ENCODE measurements at regions of chr15 and their contacts with region 1.

Region 1: GRCh38 chr15:42548253-42549031 is at the starts of genes HAUS2 and LRRC57:
- DNase-seq: peak; percentile 86
- H3K4me3 Mint-ChIP-seq: peak within 1 kb of the TSS; percentile 96
- H3K27ac Mint-ChIP-seq: peak within 1 kb of the TSS; percentile 94
- H3K4me1 Mint-ChIP-seq: peaks cover 50% of the 10 kb centered on the region
- H3K27me3 Mint-ChIP-seq: no peaks in the 10 kb centered on the region
- total RNA-seq, gene HAUS2: 43.2 and 46.7 TPM in 2 replicates
- total RNA-seq, gene LRRC57: 19.9 TPM in 2 replicates

Region 2: DNA sequence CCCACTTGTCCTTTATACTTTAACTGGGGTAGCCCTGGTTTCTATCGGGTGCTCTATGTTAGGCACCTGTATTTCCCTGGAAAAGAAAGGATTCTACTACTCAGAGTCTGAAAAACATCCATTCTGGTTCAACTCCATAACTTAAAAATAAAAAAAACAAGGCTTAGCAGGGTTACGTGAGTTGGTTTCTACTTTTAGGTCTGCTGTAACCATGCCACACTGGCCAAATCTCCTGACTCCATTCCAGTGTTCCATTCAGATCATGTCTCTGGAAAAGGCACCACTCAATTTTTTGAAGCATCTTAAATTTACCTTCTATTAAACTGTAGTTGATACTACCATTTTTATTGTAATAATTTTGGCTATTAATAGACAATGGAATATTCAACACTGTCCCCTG is 127.1 kb before region 1 on chr15:
- intact Hi-C with region 1: no loop called
- DNase-seq: no peak
- H3K4me3 Mint-ChIP-seq: no peak overlapping the region
- H3K27ac Mint-ChIP-seq: no peak overlapping the region
- H3K4me1 Mint-ChIP-seq: no peaks in the 10 kb centered on the region
- H3K27me3 Mint-ChIP-seq: no peaks in the 10 kb centered on the region

Region 3: GRCh38 chr15:42495361-42496212 is 52.9 kb before region 1 on chr15 and contains the start of gene SNAP23:
- intact Hi-C with region 1: loop called (anchors 1 kb)
- DNase-seq: peak; percentile 84
- H3K4me3 Mint-ChIP-seq: peak within 1 kb of the TSS; percentile 100
- H3K27ac Mint-ChIP-seq: peak within 1 kb of the TSS; percentile 89
- H3K4me1 Mint-ChIP-seq: peaks cover 60% of the 10 kb centered on the region
- H3K27me3 Mint-ChIP-seq: no peaks in the 10 kb centered on the region
- total RNA-seq, gene SNAP23: 73.8 and 87.5 TPM in 2 replicates

Region 4: GRCh38 chr15:42558739-42559138 is 10.3 kb after region 1 on chr15:
- intact Hi-C with region 1: no loop called
- DNase-seq: no peak
- H3K4me3 Mint-ChIP-seq: no peak overlapping the region
- H3K27ac Mint-ChIP-seq: no peak overlapping the region
- H3K4me1 Mint-ChIP-seq: peaks cover 11% of the 10 kb centered on the region
- H3K27me3 Mint-ChIP-seq: no peaks in the 10 kb centered on the region

Region 5: DNA sequence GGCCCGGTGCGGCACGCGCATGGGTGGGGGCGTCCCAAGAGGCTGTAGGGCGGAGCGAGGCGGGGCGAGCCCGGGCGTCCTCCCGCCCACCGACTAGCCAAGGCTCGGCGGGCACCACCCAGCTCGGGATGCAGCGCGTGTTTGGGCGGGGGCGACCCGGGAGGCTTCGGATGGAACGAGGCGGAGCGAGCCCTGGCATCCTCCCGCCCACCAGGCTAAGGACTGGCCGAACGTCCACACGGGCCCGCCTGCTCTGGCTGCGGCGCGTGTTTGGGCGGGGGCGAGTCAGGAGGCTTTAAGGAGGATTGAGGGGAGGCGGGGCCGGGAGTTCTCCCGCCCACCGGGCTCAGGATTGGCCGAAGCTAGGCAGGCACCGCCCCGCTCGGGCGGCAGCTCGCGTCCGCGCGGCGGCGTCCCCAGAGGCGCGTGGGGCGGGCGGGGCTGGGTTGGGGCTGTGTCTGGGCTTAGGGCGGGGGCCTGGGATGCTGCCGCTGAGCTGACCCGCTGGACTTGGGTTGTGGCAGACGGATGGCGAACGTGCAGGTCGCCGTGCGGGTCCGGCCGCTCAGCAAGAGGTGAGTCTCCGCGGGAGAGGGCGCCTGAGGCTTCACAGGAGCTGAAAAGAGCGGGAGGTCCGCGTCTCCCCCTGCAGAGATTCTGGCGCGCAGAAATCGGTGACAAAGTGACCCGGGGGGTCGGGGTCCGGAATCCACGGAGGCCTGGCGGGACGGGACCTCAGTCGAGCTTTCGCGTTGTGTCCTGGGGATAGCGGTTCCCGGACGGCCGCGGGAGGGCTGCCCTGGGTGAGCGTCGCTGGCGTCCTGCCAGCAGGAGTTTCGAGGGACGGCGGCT is 27.0 kb after region 1 on chr15 and contains the start of gene STARD9:
- intact Hi-C with region 1: loop called (anchors 1 kb)
- DNase-seq: peak; percentile 93
- H3K4me3 Mint-ChIP-seq: peak within 1 kb of the TSS; percentile 92
- H3K27ac Mint-ChIP-seq: peak within 1 kb of the TSS; percentile 72
- H3K4me1 Mint-ChIP-seq: peaks cover 35% of the 10 kb centered on the region
- H3K27me3 Mint-ChIP-seq: peaks cover 24% of the 10 kb centered on the region
- total RNA-seq, gene STARD9: 6.1 and 9.2 TPM in 2 replicates

Region 6: DNA sequence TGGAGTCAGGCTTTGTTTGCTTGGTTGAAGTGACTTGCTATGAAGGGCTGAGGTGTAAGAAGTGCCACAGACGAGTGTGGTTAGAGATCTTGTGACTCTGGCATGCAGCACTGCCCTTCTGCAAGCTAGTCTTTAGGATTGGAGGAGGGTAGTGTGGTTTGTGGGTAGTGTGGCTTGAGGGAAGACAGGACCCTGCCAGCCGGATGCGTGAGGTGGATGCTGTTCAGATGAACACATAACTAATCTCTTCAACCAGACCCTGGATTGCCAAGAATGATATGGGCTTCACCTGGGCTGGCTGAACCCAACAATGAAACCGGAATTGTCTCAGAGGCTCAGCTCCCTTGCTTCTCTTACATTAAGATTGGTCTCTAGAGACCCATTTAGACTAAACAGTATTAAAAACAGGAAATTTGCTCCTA is 59.7 kb after region 1 on chr15:
- intact Hi-C with region 1: loop called (anchors 5 kb)
- DNase-seq: peak; percentile 65
- H3K4me3 Mint-ChIP-seq: peak overlapping the region; percentile 32
- H3K27ac Mint-ChIP-seq: peak overlapping the region; percentile 67
- H3K4me1 Mint-ChIP-seq: peaks cover 45% of the 10 kb centered on the region
- H3K27me3 Mint-ChIP-seq: no peaks in the 10 kb centered on the region

Region 7: GRCh38 chr15:42650208-42651066 is 102.0 kb after region 1 on chr15:
- intact Hi-C with region 1: loop called (anchors 1 kb)
- DNase-seq: peak; percentile 61
- H3K4me3 Mint-ChIP-seq: no peak overlapping the region
- H3K27ac Mint-ChIP-seq: no peak overlapping the region
- H3K4me1 Mint-ChIP-seq: peaks cover 20% of the 10 kb centered on the region
- H3K27me3 Mint-ChIP-seq: peaks cover under 1% of the 10 kb centered on the region

Region 8: DNA sequence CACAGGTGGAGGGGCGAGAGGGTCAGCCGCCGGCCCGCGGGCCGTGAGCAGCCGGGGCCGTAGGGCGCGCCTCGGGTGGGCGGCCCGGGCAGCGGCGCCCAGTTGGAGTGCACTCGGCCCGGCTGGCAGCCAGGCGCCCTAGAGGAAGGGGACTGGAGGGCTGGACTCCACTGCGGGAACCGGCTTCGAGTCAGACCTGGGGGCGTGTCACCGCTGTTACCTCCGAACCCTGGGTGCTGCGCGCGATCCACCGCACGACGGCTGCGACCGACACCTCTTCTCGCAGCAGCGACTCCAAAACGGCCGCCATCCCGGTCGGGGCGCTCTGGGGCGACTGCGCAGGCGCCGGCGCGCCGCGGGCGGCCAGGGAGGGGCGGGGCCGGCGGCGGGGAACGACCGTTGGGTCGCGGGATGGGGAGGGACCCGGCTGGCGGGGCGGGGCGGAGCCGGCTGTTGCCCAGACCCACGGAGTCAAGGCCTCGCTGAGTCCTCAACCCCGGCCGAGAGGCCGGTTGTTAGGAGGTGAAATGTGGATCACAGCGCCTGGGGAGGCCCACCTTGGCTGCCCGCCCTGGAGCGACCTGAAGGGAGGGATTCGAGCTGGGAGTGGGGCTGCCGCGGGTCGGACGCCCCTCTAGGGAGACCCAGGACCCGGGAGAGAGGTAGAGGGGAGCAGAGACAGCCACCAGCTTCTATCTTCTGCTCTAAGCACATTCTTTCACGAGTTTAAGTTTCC is 188.5 kb after region 1 on chr15 and contains the start of gene CDAN1:
- intact Hi-C with region 1: loop called (anchors 10 kb)
- DNase-seq: peak; percentile 89
- H3K4me3 Mint-ChIP-seq: peak within 1 kb of the TSS; percentile 78
- H3K27ac Mint-ChIP-seq: peak within 1 kb of the TSS; percentile 65
- H3K4me1 Mint-ChIP-seq: peaks cover 7% of the 10 kb centered on the region
- H3K27me3 Mint-ChIP-seq: no peaks in the 10 kb centered on the region
- total RNA-seq, gene CDAN1: 24.0 and 26.7 TPM in 2 replicates

Region 9: DNA sequence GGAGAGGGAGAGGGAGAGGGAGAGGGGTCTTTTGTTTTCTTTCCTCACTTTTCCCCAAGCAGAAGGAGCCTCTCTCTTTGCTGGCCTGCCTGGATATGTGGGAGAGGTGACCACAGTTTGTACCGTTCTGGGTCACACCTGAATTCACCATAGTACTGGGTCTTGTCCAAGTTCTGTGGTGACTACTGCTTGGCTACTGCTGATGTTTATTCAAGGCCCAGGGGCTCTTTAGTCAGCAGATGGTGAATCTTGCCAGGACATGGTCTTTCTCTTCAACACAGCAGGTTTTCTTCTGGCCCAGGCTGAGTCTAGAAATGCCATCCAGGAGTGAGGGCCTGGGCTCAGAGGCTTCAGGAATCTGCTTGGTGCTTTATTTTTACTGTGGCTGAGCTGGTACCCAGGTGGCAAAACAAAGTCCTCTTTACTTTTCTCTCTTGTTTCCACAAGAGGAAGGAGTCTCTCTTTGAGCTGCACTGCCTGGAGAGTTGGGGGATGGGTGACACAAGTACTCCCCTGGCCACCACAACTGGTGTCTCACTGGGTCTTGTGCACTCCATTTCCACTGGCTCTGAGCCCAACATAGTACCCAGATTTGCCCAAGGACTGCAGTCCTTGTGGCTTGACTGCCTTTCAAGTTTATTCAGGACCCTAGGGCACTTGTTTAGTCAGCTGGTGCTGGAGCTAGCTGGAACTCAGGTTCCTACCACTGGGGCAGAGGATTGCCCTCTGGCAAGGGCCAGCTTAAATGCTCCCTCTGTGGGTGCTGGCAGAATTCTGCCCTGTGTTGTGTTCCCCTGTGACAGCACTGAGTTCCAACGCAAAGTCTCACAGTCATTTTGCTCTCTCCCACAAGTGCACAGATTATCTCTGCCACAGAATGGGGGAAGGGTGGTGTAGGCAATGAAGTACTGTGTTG is 620.0 kb after region 1 on chr15:
- intact Hi-C with region 1: no loop called
- DNase-seq: no peak
- H3K4me3 Mint-ChIP-seq: no peak overlapping the region
- H3K27ac Mint-ChIP-seq: no peak overlapping the region
- H3K4me1 Mint-ChIP-seq: peaks cover 4% of the 10 kb centered on the region
- H3K27me3 Mint-ChIP-seq: no peaks in the 10 kb centered on the region